Activated B cell treated with CpG ODN at 0.5 μM for 24 hours (primary cell): ENCODE measurements at regions of chr4 and their contacts with region 1.

Region 1: DNA sequence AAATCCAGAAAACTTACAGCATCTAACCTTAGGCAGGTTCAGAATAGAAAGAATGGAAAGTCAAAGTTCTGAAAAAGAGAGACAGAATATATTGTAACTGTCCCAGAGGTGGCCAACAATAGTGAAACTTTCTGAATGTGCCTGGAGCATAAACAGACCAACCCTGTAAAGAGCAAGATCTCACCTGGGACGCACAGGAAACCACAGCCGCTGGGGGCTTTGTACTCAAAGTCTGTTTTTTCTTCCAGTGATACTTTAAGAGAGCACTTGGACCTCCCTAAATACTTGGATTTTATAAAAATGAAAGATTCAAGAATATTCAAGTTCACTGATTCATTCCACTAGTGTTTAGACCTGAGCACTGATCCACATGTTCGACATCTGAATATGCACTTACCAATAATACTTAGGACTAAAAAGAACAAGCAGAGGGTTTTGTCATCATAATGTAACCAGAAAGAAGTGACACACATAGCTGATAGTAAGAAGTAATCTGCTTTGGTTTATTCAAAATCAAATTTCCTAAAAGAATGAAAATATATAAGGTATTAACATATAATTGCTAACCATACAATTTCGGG is 35.3 kb downstream of the ARAP2 start:
- DNase-seq: no peak
- ATAC-seq: no peak
- H3K4me3 Mint-ChIP-seq: no peak overlapping the region
- H3K27ac Mint-ChIP-seq: no peak overlapping the region
- H3K4me1 Mint-ChIP-seq: peaks cover 18% of the 10 kb centered on the region
- H3K27me3 Mint-ChIP-seq: no peaks in the 10 kb centered on the region
- CTCF ChIP-seq: no peak

Region 2: GRCh38 chr4:35526456-35526855 is 682.5 kb before region 1 on chr4:
- CTCF ChIA-PET with region 1: no interaction called
- POLR2A ChIA-PET with region 1: no interaction called
- intact Hi-C with region 1: no loop called
- DNase-seq: no peak
- ATAC-seq: no peak
- H3K4me3 Mint-ChIP-seq: no peak overlapping the region
- H3K27ac Mint-ChIP-seq: no peak overlapping the region
- H3K4me1 Mint-ChIP-seq: no peaks in the 10 kb centered on the region
- H3K27me3 Mint-ChIP-seq: no peaks in the 10 kb centered on the region
- CTCF ChIP-seq: no peak

Region 3: DNA sequence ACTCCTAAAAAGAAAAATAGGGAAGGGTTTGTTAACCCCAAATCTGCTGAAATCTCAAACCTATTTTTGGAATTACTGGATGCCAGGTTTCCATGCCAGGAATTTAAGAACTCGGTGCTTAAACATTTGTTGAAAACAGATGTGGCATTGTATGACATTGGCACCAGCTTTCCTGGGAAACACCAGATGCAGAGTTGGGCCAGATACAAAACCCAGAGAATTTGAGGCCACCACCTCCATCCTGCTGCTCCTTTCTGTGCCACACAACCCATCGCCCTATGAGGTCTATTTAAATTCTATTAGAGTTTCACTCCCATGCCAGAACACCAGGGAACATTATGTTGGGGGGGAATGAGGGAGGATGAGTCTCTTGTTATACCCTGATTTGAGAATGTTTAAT is 36.3 kb before region 1 on chr4:
- CTCF ChIA-PET with region 1: no interaction called
- POLR2A ChIA-PET with region 1: no interaction called
- intact Hi-C with region 1: loop called (anchors 5 kb)
- DNase-seq: no peak
- ATAC-seq: no peak
- H3K4me3 Mint-ChIP-seq: no peak overlapping the region
- H3K27ac Mint-ChIP-seq: no peak overlapping the region
- H3K4me1 Mint-ChIP-seq: no peaks in the 10 kb centered on the region
- H3K27me3 Mint-ChIP-seq: no peaks in the 10 kb centered on the region
- CTCF ChIP-seq: no peak

Region 4: GRCh38 chr4:36224972-36225903 is 16.3 kb after region 1 on chr4:
- CTCF ChIA-PET with region 1: no interaction called
- POLR2A ChIA-PET with region 1: no interaction called
- intact Hi-C with region 1: loop called (anchors 2 kb)
- DNase-seq: peak; percentile 16
- ATAC-seq: peak; percentile 78
- H3K4me3 Mint-ChIP-seq: peak overlapping the region; percentile 11
- H3K27ac Mint-ChIP-seq: peak overlapping the region; percentile 72
- H3K4me1 Mint-ChIP-seq: peaks cover 61% of the 10 kb centered on the region
- H3K27me3 Mint-ChIP-seq: no peaks in the 10 kb centered on the region
- CTCF ChIP-seq: no peak